ENCODE measurements at regions of chr7 and their contacts with region 1.

Region 1: DNA sequence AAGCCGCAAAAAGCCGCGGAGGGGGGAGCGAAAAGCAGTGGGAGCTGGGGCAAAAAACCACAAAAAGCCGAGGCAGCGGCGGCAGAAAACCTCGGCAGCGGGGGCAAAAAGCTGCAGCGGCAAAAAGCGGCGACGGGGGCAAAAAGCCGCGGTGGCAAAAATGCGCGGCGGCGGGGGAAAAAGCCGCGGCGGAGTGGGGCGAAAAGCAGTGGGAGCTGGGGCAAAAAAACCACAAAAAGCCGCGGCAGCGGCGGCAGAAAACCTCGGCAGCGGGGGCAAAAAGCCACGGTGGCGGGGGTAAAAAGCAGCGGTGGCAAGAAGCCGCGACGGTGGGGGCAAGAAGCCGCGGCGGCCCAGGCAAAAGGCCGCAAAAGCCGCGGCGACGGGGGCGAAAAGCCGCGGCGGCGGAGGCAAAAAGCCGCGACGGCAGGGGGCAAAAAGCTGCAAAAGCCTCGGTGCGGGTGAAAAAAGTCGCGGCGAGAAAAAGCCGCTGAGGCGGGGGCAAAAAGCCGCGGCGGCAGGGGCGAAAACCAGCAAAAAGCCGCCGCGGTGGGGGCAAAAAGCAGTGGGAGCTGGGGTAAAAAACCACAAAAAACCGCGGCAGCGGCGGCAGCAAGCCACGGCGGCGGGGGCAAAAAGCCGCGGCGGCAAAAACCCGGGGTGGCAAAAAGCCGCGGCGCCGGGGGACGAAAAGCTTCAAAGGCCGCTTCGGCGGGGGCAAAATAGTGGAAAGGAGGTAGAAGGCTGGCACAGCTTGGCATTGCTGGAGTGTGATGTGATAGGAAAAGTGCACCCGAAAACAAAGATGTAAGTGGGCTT is 135.9 kb downstream of the ZNF92 start:
- DNase-seq: peak; percentile 78
- H3K4me3 ChIP-seq: peak overlapping the region; percentile 79
- H3K27ac ChIP-seq: peak overlapping the region; percentile 69
- H3K4me1 ChIP-seq: peaks cover 11% of the 10 kb centered on the region
- CTCF ChIP-seq: no peak

Region 2: GRCh38 chr7:65373608-65374351 is 135.8 kb before region 1 on chr7 and contains the start of gene ZNF92:
- CTCF ChIA-PET with region 1: no interaction called
- POLR2A ChIA-PET with region 1: interaction called, 8 read pairs
- intact Hi-C with region 1: loop called (anchors 10 kb)
- DNase-seq: peak; percentile 99
- H3K4me3 ChIP-seq: peak within 1 kb of the TSS; percentile 89
- H3K27ac ChIP-seq: peak within 1 kb of the TSS; percentile 84
- H3K4me1 ChIP-seq: peaks cover 31% of the 10 kb centered on the region
- CTCF ChIP-seq: no peak
- total RNA-seq, gene ZNF92: 31.1 and 31.2 TPM in 2 replicates